ENCODE measurements at regions of chr10 and their contacts with region 1.

Region 1: DNA sequence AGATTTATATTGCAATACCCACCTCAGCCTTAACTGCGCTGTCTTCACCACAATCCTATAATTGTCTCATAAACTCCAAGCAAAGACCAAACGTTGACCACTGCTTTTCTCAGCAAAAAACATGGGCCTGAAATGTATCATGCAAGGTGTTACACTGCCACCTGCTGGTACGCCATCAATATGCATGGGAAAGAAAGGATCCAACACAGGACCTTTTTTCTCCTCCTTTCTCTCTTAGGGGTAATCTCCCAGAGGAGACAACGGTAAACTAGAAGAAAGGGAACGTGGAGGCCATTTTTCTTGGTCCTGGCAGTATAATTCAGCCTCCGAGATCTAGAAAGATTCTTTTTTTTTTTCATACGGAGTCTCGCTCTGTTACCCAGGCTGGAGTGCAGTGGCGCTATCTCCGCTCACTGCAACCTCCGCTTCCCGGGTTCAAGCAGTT is 79.1 kb upstream of the MPP7 start:
- DNase-seq: peak; percentile 50 to 93 (median 78)
- ATAC-seq: peak; percentile 75 to 93 (median 82)
- H3K4me3 ChIP-seq: no peak overlapping the region
- H3K4me3 Mint-ChIP-seq: peak overlapping the region in 1 of 3 donors; percentile 2
- H3K27ac ChIP-seq: no peak overlapping the region
- H3K27ac Mint-ChIP-seq: peak overlapping the region; percentile 67 to 82
- H3K4me1 ChIP-seq: peaks cover 11 to 12% of the 10 kb centered on the region in 2 experiments
- H3K4me1 Mint-ChIP-seq: peaks cover 30 to 41% (median 32%) of the 10 kb centered on the region in 3 donors
- H3K27me3 ChIP-seq: peaks cover 0 to 3% of the 10 kb centered on the region in 2 experiments
- H3K27me3 Mint-ChIP-seq: peaks cover 0 to 5% of the 10 kb centered on the region in 2 donors

Region 2: GRCh38 chr10:28241741-28242399 is 140.1 kb before region 1 on chr10:
- CTCF ChIA-PET with region 1: interaction called, 28 to 35 read pairs
- POLR2A ChIA-PET with region 1: no interaction called
- DNase-seq: peak in 22 of 35 experiments; percentile 3 to 72 (median 22)
- ATAC-seq: peak; percentile 63 to 75 (median 66)
- H3K4me3 ChIP-seq: no peak overlapping the region
- H3K4me3 Mint-ChIP-seq: no peak overlapping the region
- H3K27ac ChIP-seq: no peak overlapping the region
- H3K27ac Mint-ChIP-seq: no peak overlapping the region
- H3K4me1 ChIP-seq: peaks cover 0 to 14% of the 10 kb centered on the region in 2 experiments
- H3K4me1 Mint-ChIP-seq: peaks cover 32 to 42% (median 38%) of the 10 kb centered on the region in 3 donors
- H3K27me3 ChIP-seq: no peaks in the 10 kb centered on the region
- H3K27me3 Mint-ChIP-seq: no peaks in the 10 kb centered on the region

Region 3: DNA sequence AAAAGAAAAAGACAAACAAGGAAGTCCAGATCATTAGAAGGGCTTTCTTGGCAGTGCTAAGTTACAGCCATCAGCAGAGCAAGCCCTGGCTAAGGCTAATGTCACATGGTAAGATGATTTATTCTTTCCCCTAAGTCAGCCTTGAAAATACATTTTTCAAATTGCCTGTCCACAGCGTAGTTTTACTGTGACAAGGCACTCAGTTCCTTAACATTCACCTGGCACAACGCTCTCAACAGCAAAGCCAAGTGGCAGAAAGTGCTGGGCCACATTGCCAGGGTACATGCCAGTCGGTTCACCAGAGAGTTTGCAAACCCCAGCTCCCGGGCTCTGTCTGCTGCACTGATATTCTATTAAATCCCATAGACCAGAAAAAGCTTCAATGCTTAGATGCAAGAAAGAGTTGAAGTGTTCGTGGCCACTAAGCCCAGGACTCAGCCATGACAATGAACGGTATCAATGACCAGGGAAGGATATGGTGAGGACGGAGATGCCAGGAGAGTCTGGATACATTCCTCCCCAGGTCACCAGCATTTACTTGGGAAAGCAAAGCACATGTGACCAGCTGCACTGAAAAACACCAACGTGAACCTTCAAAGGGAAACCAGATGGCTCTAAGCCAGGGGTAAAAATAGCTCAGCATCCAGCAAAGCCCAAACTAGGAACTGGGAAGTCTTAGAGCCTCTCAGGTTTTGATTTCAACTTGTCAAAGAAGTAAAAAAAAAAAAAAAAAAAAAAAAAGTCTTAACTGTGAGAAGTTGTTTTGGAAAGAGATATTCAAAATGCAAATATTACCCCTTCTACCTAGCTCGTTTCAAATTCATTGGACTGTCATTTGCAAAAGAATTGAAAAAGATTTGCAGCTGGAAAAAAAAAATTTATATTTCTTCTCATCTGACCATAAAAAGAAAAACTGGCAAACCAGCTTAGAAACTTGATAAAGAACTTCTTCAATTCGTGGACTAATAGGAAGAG is 55.1 kb before region 1 on chr10:
- CTCF ChIA-PET with region 1: interaction called, 7 to 10 read pairs
- POLR2A ChIA-PET with region 1: interaction called, 3 to 11 read pairs
- DNase-seq: no peak
- ATAC-seq: peak in 1 of 4 experiments; percentile 30
- H3K4me3 ChIP-seq: no peak overlapping the region
- H3K4me3 Mint-ChIP-seq: peak overlapping the region in 1 of 3 donors; percentile 66
- H3K27ac ChIP-seq: no peak overlapping the region
- H3K27ac Mint-ChIP-seq: peak overlapping the region in 1 of 2 donors; percentile 71
- H3K4me1 ChIP-seq: peaks cover 28 to 30% of the 10 kb centered on the region in 2 experiments
- H3K4me1 Mint-ChIP-seq: peaks cover 69 to 81% (median 74%) of the 10 kb centered on the region in 3 donors
- H3K27me3 ChIP-seq: no peaks in the 10 kb centered on the region
- H3K27me3 Mint-ChIP-seq: no peaks in the 10 kb centered on the region

Region 4: DNA sequence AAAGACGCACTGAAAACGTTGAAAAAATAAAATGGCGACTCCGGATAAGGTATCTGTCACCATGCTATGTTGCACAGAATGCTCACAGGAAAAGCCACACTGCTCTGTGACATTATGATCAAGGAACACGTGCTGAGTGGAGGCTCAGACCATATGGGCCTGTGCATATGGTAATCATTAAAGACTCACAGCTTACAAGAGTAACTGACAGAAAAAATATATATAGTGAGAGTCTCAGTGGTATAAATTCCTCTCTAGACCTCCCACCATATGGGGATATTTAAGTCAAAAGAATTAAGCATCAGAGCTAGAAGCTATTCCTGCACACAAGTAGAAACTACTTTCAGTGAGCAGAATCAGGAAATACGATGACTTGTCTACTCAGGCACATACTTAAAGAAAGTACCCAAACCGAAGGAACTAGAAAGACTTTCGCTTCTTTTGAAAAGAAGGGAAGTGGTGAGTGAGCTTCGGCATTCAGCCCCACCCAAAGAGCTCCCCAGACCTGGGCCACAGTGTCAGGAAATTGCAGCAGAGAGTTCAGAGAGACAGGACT is 13.9 kb before region 1 on chr10:
- CTCF ChIA-PET with region 1: interaction called in 1 of 2 experiments, 21 read pairs
- POLR2A ChIA-PET with region 1: interaction called, 7 to 14 read pairs
- DNase-seq: peak; percentile 20 to 87 (median 54)
- ATAC-seq: peak; percentile 96 to 98 (median 98)
- H3K4me3 ChIP-seq: peak overlapping the region in 1 of 2 donors; percentile 32
- H3K4me3 Mint-ChIP-seq: peak overlapping the region; percentile 40 to 73 (median 54)
- H3K27ac ChIP-seq: peak overlapping the region; percentile 72
- H3K27ac Mint-ChIP-seq: peak overlapping the region; percentile 95 to 100
- H3K4me1 ChIP-seq: peaks cover 34 to 56% of the 10 kb centered on the region in 2 experiments
- H3K4me1 Mint-ChIP-seq: peaks cover 53 to 68% (median 62%) of the 10 kb centered on the region in 3 donors
- H3K27me3 ChIP-seq: no peaks in the 10 kb centered on the region
- H3K27me3 Mint-ChIP-seq: no peaks in the 10 kb centered on the region

Region 5: GRCh38 chr10:28468707-28469483 is 87.0 kb after region 1 on chr10:
- CTCF ChIA-PET with region 1: no interaction called
- POLR2A ChIA-PET with region 1: no interaction called
- DNase-seq: no peak
- ATAC-seq: no peak
- H3K4me3 ChIP-seq: no peak overlapping the region
- H3K4me3 Mint-ChIP-seq: no peak overlapping the region
- H3K27ac ChIP-seq: no peak overlapping the region
- H3K27ac Mint-ChIP-seq: no peak overlapping the region
- H3K4me1 ChIP-seq: no peaks in the 10 kb centered on the region
- H3K4me1 Mint-ChIP-seq: no peaks in the 10 kb centered on the region
- H3K27me3 ChIP-seq: peaks cover 0 to 3% of the 10 kb centered on the region in 2 experiments
- H3K27me3 Mint-ChIP-seq: peaks cover 2 to 3% of the 10 kb centered on the region in 2 donors

Region 6: GRCh38 chr10:28788252-28788651 is 406.3 kb after region 1 on chr10:
- CTCF ChIA-PET with region 1: no interaction called
- POLR2A ChIA-PET with region 1: no interaction called
- DNase-seq: no peak
- ATAC-seq: no peak
- H3K4me3 ChIP-seq: no peak overlapping the region
- H3K4me3 Mint-ChIP-seq: no peak overlapping the region
- H3K27ac ChIP-seq: no peak overlapping the region
- H3K27ac Mint-ChIP-seq: no peak overlapping the region
- H3K4me1 ChIP-seq: no peaks in the 10 kb centered on the region
- H3K4me1 Mint-ChIP-seq: no peaks in the 10 kb centered on the region
- H3K27me3 ChIP-seq: peaks cover 0 to 8% of the 10 kb centered on the region in 2 experiments
- H3K27me3 Mint-ChIP-seq: peaks cover 15 to 18% of the 10 kb centered on the region in 2 donors